ENCODE measurements at regions of chr22 and their contacts with region 1.

Region 1: GRCh38 chr22:39343259-39344048 is 6.3 kb upstream of the SYNGR1 start:
- DNase-seq: peak; percentile 53
- H3K4me3 ChIP-seq: no peak overlapping the region
- H3K27ac ChIP-seq: no peak overlapping the region
- H3K4me1 ChIP-seq: peaks cover 2% of the 10 kb centered on the region
- H3K27me3 ChIP-seq: peaks cover 5 to 10% of the 10 kb centered on the region in 2 experiments
- CTCF ChIP-seq: peak; percentile 70 to 83
- POLR2A ChIP-seq: no peak

Region 2: DNA sequence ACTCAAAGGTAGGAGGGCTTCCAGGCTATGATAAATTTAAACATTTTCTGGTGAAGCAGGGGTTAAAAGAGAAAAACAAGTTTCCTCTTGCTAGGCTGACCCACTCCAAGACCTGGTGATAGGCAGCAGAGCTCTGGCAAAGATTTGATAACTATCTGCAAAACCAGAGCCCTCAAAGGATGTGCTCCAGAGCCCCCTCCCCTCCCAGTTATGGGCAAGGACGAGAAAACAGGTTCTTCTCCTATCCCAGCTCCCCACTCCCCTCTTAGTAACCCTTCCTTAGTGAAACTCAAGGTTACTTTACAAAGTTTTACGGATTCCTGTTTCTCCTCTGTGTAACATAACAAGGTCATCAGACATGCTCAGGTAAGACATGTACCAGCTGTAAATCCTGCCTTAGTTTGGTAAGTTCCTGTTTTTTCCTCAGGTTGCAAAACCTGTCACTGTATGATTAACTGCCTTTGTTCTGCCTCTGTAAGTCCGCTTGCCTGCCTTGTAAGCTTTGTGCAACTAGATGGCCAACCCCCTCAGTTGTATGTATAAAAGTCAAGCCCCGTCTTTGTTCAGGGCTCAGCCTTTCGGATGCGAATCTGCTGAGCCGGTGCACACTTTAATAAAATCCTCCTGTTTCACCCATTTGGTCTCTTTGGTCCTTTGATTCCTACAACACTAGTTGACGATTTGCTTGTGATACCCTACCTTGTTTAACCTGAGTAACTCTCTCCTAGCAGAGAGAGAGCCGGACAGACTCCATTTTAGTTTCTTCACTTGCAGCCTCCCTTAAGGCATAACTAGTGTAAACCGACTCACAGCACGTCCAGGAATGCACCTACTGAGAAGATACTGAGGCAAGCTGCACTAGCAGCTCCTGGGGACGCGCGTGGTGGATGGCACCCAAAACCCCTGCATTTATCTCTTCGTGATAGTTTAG is 232.6 kb before region 1 on chr22:
- CTCF ChIA-PET with region 1: no interaction called
- POLR2A ChIA-PET with region 1: no interaction called
- dilution Hi-C with region 1: no loop called
- intact Hi-C with region 1: no loop called
- DNase-seq: no peak
- H3K4me3 ChIP-seq: no peak overlapping the region
- H3K27ac ChIP-seq: no peak overlapping the region
- H3K4me1 ChIP-seq: no peaks in the 10 kb centered on the region
- H3K27me3 ChIP-seq: peaks cover 21 to 22% of the 10 kb centered on the region in 2 experiments
- CTCF ChIP-seq: no peak
- POLR2A ChIP-seq: no peak

Region 3: GRCh38 chr22:39301926-39302325 is 41.5 kb before region 1 on chr22:
- CTCF ChIA-PET with region 1: no interaction called
- POLR2A ChIA-PET with region 1: no interaction called
- dilution Hi-C with region 1: no loop called
- intact Hi-C with region 1: no loop called
- DNase-seq: no peak
- H3K4me3 ChIP-seq: no peak overlapping the region
- H3K27ac ChIP-seq: no peak overlapping the region
- H3K4me1 ChIP-seq: peaks cover 10% of the 10 kb centered on the region
- H3K27me3 ChIP-seq: no peaks in the 10 kb centered on the region
- CTCF ChIP-seq: no peak
- POLR2A ChIP-seq: no peak

Region 4: DNA sequence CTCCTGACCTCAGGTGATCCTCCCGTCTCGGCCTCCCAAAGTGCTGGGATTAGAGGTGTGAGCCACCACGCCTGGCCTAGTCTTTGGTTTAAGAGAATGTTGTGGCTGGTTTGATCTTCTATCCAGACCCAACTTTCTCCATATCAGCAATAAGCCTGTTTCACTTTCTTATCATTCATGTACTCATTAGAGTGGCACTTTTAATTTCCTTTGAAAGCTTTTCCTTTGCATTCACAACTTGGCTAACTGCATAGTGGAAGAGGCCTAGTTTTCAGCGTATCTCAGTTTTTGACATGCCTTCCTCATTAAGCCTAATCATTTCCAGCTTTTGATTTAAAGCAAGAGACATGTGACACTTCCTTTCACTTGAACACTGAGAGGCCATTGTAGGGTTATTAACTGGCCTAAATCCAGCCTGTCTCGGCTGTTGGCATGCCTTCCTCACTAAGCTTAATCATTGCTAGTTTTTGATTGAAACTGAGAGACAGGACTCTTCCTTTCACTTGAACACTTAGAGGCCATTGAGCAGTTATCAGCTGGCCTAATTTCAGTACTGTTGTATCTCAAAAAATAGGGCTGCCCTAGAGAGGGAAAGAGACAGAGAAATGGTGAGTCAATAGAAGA is 10.9 kb before region 1 on chr22:
- CTCF ChIA-PET with region 1: interaction called, 43 read pairs
- POLR2A ChIA-PET with region 1: no interaction called
- dilution Hi-C with region 1: no loop called
- intact Hi-C with region 1: no loop called
- DNase-seq: peak; percentile 81
- H3K4me3 ChIP-seq: no peak overlapping the region
- H3K27ac ChIP-seq: no peak overlapping the region
- H3K4me1 ChIP-seq: peaks cover 3% of the 10 kb centered on the region
- H3K27me3 ChIP-seq: no peaks in the 10 kb centered on the region
- CTCF ChIP-seq: no peak
- POLR2A ChIP-seq: no peak

Region 5: DNA sequence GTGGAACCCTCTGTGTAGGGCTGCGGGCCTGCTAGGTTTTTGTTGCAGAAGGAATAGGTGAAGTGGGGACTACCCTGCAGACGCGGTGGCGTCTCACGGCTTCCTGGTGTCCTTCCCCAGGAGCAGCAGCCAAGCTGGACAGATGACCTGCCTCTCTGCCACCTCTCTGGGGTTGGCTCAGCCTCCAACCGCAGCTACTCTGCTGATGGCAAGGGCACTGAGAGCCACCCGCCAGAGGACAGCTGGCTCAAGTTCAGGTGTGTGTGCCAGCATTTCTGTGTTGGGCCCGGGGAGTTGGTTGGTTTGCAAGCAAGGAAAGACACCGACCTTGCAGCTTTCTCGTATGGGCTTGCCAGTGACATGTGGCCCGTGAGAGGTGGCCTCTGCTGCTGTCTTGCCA is 71.4 kb after region 1 on chr22:
- CTCF ChIA-PET with region 1: no interaction called
- POLR2A ChIA-PET with region 1: no interaction called
- dilution Hi-C with region 1: no loop called
- intact Hi-C with region 1: no loop called
- DNase-seq: no peak
- H3K4me3 ChIP-seq: no peak overlapping the region
- H3K27ac ChIP-seq: no peak overlapping the region
- H3K4me1 ChIP-seq: no peaks in the 10 kb centered on the region
- H3K27me3 ChIP-seq: no peaks in the 10 kb centered on the region
- CTCF ChIP-seq: no peak
- POLR2A ChIP-seq: no peak